ENCODE measurements at regions of chr11 and their contacts with region 1.

Region 1: DNA sequence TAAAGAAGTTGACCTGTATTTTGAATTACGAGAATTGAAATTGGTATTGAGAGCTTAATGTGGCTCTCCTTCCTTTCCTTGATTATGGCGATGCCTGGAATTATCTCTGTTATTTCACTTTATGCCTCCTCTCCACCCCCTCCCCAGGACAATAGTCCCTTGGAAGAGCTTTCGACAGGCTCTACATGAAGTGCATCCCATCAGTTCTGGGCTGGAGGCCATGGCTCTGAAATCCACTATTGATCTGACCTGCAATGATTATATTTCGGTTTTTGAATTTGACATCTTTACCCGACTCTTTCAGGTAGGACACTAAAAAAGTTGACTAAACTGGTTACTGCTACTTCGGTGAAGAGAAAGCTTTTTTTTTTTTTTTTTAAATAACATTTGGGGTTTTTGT is 43.2 kb downstream of the MCAM start:
- DNase-seq: no peak
- ATAC-seq: no peak
- H3K4me3 ChIP-seq: no peak overlapping the region
- H3K27ac ChIP-seq: no peak overlapping the region
- H3K4me1 ChIP-seq: peaks cover 0 to 3% (median 0%) of the 10 kb centered on the region in 9 donors
- H3K27me3 ChIP-seq: no peaks in the 10 kb centered on the region
- CTCF ChIP-seq: no peak

Region 2: DNA sequence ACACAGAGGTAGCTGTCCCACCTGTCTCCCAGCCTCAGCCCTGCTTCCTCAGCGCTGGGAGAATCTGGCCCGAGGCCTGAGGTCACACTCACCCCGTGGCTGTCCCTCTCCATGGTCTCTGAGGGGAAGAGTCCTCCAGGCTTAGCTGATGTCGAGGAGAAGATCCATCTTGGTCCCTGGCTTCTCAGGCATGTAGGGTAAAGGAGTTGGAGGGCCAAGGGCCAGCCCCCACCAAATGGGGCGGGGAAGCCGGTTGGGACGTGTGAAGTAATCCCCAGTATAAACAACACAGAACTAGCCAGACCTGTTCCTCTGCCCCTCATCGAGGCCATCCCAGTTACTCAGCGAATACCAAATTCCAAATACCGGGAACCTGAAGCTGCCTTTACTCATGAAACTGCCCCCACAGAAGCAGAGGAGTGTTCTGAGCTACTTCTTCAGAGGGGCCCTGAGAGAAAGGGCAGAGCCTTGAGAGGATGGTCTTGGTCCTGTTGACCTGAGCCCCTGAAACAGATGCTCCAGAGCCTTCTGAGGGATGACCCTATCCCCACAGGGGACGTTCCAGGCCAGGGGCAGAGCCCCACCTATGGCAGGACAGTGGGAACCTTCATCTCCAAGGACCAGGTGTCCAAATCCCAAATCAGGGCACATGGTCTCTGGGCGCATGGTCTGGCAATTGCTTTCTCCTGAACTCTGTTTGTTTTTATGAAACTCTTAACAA is 1344.4 kb before region 1 on chr11 and contains the start of gene TMPRSS13:
- intact Hi-C with region 1: no loop called
- DNase-seq: no peak
- ATAC-seq: no peak
- H3K4me3 ChIP-seq: no peak within 1 kb of the TSS
- H3K27ac ChIP-seq: no peak within 1 kb of the TSS
- H3K4me1 ChIP-seq: peaks cover 0 to 37% (median 0%) of the 10 kb centered on the region in 9 donors
- H3K27me3 ChIP-seq: peaks cover 0 to 11% (median 0%) of the 10 kb centered on the region in 7 donors
- CTCF ChIP-seq: no peak
- total RNA-seq, gene TMPRSS13: 0.07 to 0.32 (median 0.18) TPM in 3 of 10 donors, not detected in the others

Region 3: GRCh38 chr11:119218141-119218878 is 55.4 kb before region 1 on chr11:
- intact Hi-C with region 1: loop called in 1 of 10 experiments (anchors 10 kb)
- DNase-seq: no peak
- ATAC-seq: peak in 1 of 8 donors; percentile 35
- H3K4me3 ChIP-seq: no peak overlapping the region
- H3K27ac ChIP-seq: no peak overlapping the region
- H3K4me1 ChIP-seq: peaks cover 0 to 26% (median 12%) of the 10 kb centered on the region in 9 donors
- H3K27me3 ChIP-seq: no peaks in the 10 kb centered on the region
- CTCF ChIP-seq: no peak

Measured in heart right ventricle (tissue), 16 donors.